Activated naive CD4-positive, alpha-beta T cell treated with anti-CD3 and anti-CD28 coated beads for 36 hours (primary cell): ENCODE measurements at regions of chr12 and their contacts with region 1.

Region 1: DNA sequence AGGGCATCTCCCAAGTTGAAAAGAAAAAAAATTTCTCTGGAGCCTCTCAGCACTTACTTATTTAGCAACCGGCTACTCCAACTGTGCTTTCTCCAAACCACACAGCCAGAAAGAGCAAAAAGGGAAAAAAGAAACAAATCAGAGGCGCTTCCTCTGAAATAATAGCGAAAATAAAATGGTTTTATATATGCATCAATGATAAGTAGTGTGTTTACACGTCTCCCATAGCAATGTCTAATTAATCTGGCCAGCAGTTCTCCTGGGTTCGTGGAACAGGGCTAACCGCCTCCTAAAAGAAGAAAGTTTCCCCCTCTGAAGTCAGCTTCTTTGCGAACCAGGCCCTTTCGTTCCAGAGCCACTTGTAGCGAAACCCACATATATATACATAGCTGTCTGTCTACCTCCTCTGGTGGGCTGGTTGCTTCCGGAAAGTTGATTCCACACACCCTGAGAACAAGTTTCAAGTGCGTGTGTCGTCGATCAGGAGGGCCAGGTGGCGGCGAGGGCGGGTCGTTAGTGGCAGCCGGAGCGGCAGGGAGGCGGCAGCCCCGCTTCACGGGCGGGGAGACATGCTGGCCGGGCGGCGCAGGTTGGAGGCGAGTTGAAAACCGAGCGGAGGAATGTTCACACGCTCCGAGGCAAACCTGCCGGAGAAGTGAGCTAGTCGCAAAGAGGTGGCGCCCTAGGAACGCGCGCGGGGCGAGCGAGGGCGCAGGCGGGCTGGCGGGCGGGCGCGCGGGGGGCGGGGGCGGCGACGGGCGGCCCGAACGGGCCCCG is 2.7 kb downstream of the PTHLH start:
- DNase-seq: peak; percentile 71
- H3K4me3 Mint-ChIP-seq: peak overlapping the region; percentile 82
- H3K27ac Mint-ChIP-seq: no peak overlapping the region
- H3K4me1 Mint-ChIP-seq: peaks cover 30% of the 10 kb centered on the region
- H3K27me3 Mint-ChIP-seq: peaks cover 77% of the 10 kb centered on the region

Region 2: GRCh38 chr12:28172434-28173030 is 202.7 kb after region 1 on chr12:
- CTCF ChIA-PET with region 1: no interaction called
- intact Hi-C with region 1: loop called (anchors 2 kb)
- DNase-seq: no peak
- H3K4me3 Mint-ChIP-seq: no peak overlapping the region
- H3K27ac Mint-ChIP-seq: no peak overlapping the region
- H3K4me1 Mint-ChIP-seq: peaks cover 9% of the 10 kb centered on the region
- H3K27me3 Mint-ChIP-seq: no peaks in the 10 kb centered on the region

Region 3: GRCh38 chr12:28190321-28191050 is 220.7 kb after region 1 on chr12 and contains the start of gene CCDC91:
- CTCF ChIA-PET with region 1: no interaction called
- intact Hi-C with region 1: loop called (anchors 2 kb)
- DNase-seq: peak; percentile 91
- H3K4me3 Mint-ChIP-seq: peak within 1 kb of the TSS; percentile 96
- H3K27ac Mint-ChIP-seq: peak within 1 kb of the TSS; percentile 97
- H3K4me1 Mint-ChIP-seq: peaks cover 57% of the 10 kb centered on the region
- H3K27me3 Mint-ChIP-seq: no peaks in the 10 kb centered on the region
- total RNA-seq, gene CCDC91: 15.3 to 16.1 TPM

Region 4: DNA sequence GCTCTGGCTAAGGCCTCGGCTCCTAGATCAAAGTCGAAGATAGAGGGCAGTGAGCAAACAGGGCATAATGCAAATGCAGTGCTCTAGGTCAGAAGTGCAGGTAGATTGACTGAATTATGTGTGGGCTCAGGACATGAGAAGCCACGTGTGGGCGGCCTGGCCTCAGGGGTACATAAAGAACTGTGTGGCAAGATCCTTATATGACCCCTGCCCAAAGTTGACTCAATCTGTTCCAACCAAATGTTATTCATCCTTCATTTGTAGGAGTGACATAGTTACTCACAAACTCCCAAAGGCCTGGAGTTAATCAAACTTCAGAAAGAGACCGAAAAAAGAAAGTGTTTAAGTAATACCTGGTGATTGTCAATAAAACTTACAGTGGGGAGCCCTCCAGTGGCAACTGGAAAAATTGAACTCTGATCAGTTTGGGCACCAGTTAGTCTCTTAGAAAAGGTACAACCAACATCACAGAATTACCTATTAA is 1028.9 kb after region 1 on chr12:
- CTCF ChIA-PET with region 1: no interaction called
- intact Hi-C with region 1: loop called (anchors 5 kb)
- DNase-seq: peak; percentile 40
- H3K4me3 Mint-ChIP-seq: no peak overlapping the region
- H3K27ac Mint-ChIP-seq: no peak overlapping the region
- H3K4me1 Mint-ChIP-seq: no peaks in the 10 kb centered on the region
- H3K27me3 Mint-ChIP-seq: peaks cover 6% of the 10 kb centered on the region